PC-3 (cell line): ENCODE measurements at regions of chr13 and their contacts with region 1.

Region 1: GRCh38 chr13:51681037-51681678 is 96.9 kb downstream of the WDFY2 start:
- DNase-seq: peak; percentile 91
- ATAC-seq: peak; percentile 98
- H3K4me3 ChIP-seq: no peak overlapping the region
- H3K27ac ChIP-seq: peak overlapping the region; percentile 77
- H3K4me1 ChIP-seq: peaks cover 27% of the 10 kb centered on the region
- H3K27me3 ChIP-seq: no peaks in the 10 kb centered on the region
- CTCF ChIP-seq: no peak

Region 2: GRCh38 chr13:51643882-51644281 is 37.3 kb before region 1 on chr13:
- CTCF ChIA-PET with region 1: no interaction called
- POLR2A ChIA-PET with region 1: interaction called, 3 read pairs
- intact Hi-C with region 1: loop called (anchors 5 kb)
- DNase-seq: peak; percentile 83
- ATAC-seq: peak; percentile 84
- H3K4me3 ChIP-seq: peak overlapping the region; percentile 56
- H3K27ac ChIP-seq: peak overlapping the region; percentile 96
- H3K4me1 ChIP-seq: peaks cover 65% of the 10 kb centered on the region
- H3K27me3 ChIP-seq: no peaks in the 10 kb centered on the region
- CTCF ChIP-seq: no peak